ENCODE measurements at regions of chr1 and their contacts with region 1.

Region 1: GRCh38 chr1:29181413-29182225 is at the start of gene SRSF4:
- DNase-seq: peak; percentile 98 to 99 (median 99)
- H3K4me3 ChIP-seq: peak within 1 kb of the TSS; percentile 86 to 99
- H3K4me3 Mint-ChIP-seq: peak within 1 kb of the TSS; percentile 93 to 97 (median 95)
- H3K27ac ChIP-seq: peak within 1 kb of the TSS; percentile 93
- H3K27ac Mint-ChIP-seq: peak within 1 kb of the TSS; percentile 93 to 97 (median 95)
- H3K4me1 ChIP-seq: peaks cover 51% of the 10 kb centered on the region
- H3K4me1 Mint-ChIP-seq: peaks cover 30 to 64% (median 45%) of the 10 kb centered on the region in 4 donors
- H3K27me3 ChIP-seq: no peaks in the 10 kb centered on the region
- H3K27me3 Mint-ChIP-seq: no peaks in the 10 kb centered on the region
- total RNA-seq, gene SRSF4: 83.3 to 86.8 TPM

Region 2: GRCh38 chr1:28648474-28649198 is 533.0 kb before region 1 on chr1 and contains the start of gene RNU11:
- CTCF ChIA-PET with region 1: interaction called, 6 read pairs
- POLR2A ChIA-PET with region 1: interaction called, 25 read pairs
- intact Hi-C with region 1: loop called (anchors 1 kb)
- DNase-seq: peak; percentile 93 to 95 (median 95)
- H3K4me3 ChIP-seq: peak within 1 kb of the TSS; percentile 55 to 91
- H3K4me3 Mint-ChIP-seq: peak within 1 kb of the TSS; percentile 84 to 94 (median 90)
- H3K27ac ChIP-seq: peak within 1 kb of the TSS; percentile 96
- H3K27ac Mint-ChIP-seq: peak within 1 kb of the TSS; percentile 99 to 100 (median 99)
- H3K4me1 ChIP-seq: peaks cover 31% of the 10 kb centered on the region
- H3K4me1 Mint-ChIP-seq: peaks cover 15 to 36% (median 25%) of the 10 kb centered on the region in 4 donors
- H3K27me3 ChIP-seq: no peaks in the 10 kb centered on the region
- H3K27me3 Mint-ChIP-seq: no peaks in the 10 kb centered on the region
- total RNA-seq, gene RNU11: not detected

Region 3: DNA sequence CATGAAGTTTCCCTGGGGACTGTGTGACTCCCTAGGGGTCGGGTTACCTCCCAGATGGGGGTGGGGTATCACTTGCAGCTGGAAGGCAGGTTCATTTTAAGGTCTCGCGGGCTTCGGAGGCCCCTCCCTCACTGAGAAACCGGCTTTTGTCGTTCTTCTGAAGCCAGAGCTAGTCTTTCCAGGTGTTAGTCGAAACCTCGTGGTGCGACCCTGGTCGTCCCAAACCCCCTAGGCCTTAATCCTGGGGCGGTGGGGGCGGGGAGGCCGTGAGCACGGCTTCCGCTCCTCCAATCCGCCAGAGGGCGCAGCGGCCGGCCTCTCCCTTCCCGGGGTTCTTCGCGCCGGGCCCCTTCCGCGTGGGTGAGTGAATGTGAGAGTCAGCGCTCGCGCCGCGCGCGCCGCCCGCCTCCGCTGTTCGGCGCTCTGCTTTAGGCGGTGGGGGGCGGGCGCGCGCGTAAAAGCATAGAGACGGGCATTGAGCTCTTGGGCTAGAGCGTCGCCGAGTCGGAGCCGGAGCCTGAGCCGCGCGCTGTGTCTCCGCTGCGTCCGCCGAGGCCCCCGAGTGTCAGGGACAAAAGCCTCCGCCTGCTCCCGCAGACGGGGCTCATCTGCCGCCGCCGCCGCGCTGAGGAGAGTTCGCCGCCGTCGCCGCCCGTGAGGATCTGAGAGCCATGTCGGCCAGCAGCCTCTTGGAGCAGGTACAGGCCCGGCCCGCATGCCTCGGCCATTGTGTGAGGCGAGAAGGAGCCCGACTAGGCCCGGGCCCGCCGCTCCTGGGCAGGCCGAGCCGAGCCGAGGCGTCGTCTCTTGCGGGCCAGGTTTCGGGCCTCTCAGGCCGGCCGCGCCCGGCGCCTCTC is 444.9 kb before region 1 on chr1 and contains the start of gene YTHDF2:
- CTCF ChIA-PET with region 1: interaction called, 9 read pairs
- POLR2A ChIA-PET with region 1: interaction called, 30 read pairs
- intact Hi-C with region 1: no loop called
- DNase-seq: peak; percentile 97
- H3K4me3 ChIP-seq: peak within 1 kb of the TSS; percentile 55 to 59
- H3K4me3 Mint-ChIP-seq: peak within 1 kb of the TSS; percentile 92 to 99 (median 96)
- H3K27ac ChIP-seq: peak within 1 kb of the TSS; percentile 90
- H3K27ac Mint-ChIP-seq: peak within 1 kb of the TSS; percentile 93 to 98 (median 97)
- H3K4me1 ChIP-seq: peaks cover 43% of the 10 kb centered on the region
- H3K4me1 Mint-ChIP-seq: peaks cover 18 to 51% (median 29%) of the 10 kb centered on the region in 4 donors
- H3K27me3 ChIP-seq: no peaks in the 10 kb centered on the region
- H3K27me3 Mint-ChIP-seq: peaks cover 0 to 2% of the 10 kb centered on the region in 2 donors
- total RNA-seq, gene YTHDF2: 65.1 to 76.8 TPM

Region 4: GRCh38 chr1:28914228-28915030 is 267.2 kb before region 1 on chr1 and contains the start of gene EPB41:
- CTCF ChIA-PET with region 1: no interaction called
- POLR2A ChIA-PET with region 1: interaction called, 10 read pairs
- intact Hi-C with region 1: no loop called
- DNase-seq: peak; percentile 87 to 91 (median 87)
- H3K4me3 ChIP-seq: peak within 1 kb of the TSS; percentile 83 to 90
- H3K4me3 Mint-ChIP-seq: peak within 1 kb of the TSS; percentile 98 to 99 (median 99)
- H3K27ac ChIP-seq: peak within 1 kb of the TSS; percentile 65
- H3K27ac Mint-ChIP-seq: peak within 1 kb of the TSS; percentile 93 to 98 (median 96)
- H3K4me1 ChIP-seq: peaks cover 50% of the 10 kb centered on the region
- H3K4me1 Mint-ChIP-seq: peaks cover 34 to 55% (median 40%) of the 10 kb centered on the region in 4 donors
- H3K27me3 ChIP-seq: no peaks in the 10 kb centered on the region
- H3K27me3 Mint-ChIP-seq: no peaks in the 10 kb centered on the region
- total RNA-seq, gene EPB41: 320 to 321 TPM

Region 5: DNA sequence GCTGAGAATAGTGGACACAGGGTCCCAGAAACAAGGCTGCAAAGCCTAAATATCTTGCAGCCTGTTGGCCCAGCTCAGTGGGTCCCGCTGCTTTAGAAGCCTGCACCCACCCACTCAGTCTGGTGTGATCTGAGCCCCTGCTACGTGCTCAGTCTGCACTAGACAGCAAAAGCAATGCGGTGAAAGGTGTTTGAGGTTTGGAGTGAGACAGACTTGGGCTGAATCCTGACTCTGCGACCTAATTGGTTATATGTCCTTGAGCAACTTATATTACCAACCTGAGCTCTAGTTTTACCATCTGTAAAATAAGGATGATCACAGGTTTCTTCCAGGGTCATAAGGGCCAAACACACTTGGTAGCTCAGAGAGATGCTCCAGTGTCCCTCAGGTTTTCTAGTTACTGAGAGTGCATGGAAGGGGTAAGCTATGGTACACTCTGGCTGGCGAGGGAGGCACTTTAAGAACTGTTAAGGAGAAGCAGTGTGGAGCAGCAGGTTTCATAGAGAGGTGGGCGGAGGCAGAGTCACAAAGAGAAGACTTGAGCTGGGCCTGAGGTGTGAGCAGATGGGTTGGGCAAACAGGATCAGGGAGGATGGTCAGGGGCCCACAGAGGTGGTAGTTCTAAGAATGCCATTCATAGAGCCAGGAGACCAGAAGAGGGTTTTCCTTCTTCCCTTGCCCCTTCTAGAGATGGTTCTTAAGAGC is 68.1 kb before region 1 on chr1:
- CTCF ChIA-PET with region 1: no interaction called
- POLR2A ChIA-PET with region 1: no interaction called
- intact Hi-C with region 1: no loop called
- DNase-seq: no peak
- H3K4me3 ChIP-seq: no peak overlapping the region
- H3K4me3 Mint-ChIP-seq: peak overlapping the region in 1 of 8 donors; percentile 23
- H3K27ac ChIP-seq: no peak overlapping the region
- H3K27ac Mint-ChIP-seq: peak overlapping the region in 2 of 7 donors; percentile 12 to 33
- H3K4me1 ChIP-seq: no peaks in the 10 kb centered on the region
- H3K4me1 Mint-ChIP-seq: peaks cover 0 to 2% (median 0%) of the 10 kb centered on the region in 4 donors
- H3K27me3 ChIP-seq: no peaks in the 10 kb centered on the region
- H3K27me3 Mint-ChIP-seq: no peaks in the 10 kb centered on the region

Region 6: GRCh38 chr1:29124366-29125236 is 57.0 kb before region 1 on chr1:
- CTCF ChIA-PET with region 1: interaction called, 4 read pairs
- POLR2A ChIA-PET with region 1: interaction called, 9 read pairs
- intact Hi-C with region 1: loop called (anchors 10 kb)
- DNase-seq: peak; percentile 45 to 64 (median 52)
- H3K4me3 ChIP-seq: peak overlapping the region; percentile 52 to 55
- H3K4me3 Mint-ChIP-seq: peak overlapping the region; percentile 60 to 80 (median 74)
- H3K27ac ChIP-seq: peak overlapping the region; percentile 0
- H3K27ac Mint-ChIP-seq: no peak overlapping the region
- H3K4me1 ChIP-seq: peaks cover 25% of the 10 kb centered on the region
- H3K4me1 Mint-ChIP-seq: peaks cover 3 to 21% (median 10%) of the 10 kb centered on the region in 4 donors
- H3K27me3 ChIP-seq: no peaks in the 10 kb centered on the region
- H3K27me3 Mint-ChIP-seq: peaks cover 5 to 19% of the 10 kb centered on the region in 2 donors

Region 7: DNA sequence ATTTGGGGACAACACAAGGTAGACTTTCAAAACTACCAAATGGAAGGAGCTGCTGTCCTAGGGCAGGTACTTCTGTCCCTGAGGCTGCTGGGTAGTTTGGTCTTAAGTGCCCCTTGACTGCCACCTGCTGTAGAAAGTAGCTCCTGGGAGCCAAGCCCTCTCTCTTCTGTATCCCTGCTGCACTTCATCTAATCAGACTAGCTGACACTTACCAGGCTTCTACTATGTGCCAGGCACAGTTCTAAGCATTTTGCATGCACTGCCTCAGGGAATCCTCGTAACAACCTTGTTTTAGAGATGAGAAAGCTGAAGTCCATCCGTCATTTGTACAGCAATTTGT is 15.9 kb after region 1 on chr1:
- CTCF ChIA-PET with region 1: interaction called, 45 read pairs
- POLR2A ChIA-PET with region 1: interaction called, 22 read pairs
- intact Hi-C with region 1: loop called (anchors 2 kb)
- DNase-seq: peak in 4 of 5 donors; percentile 33 to 43 (median 36)
- H3K4me3 ChIP-seq: no peak overlapping the region
- H3K4me3 Mint-ChIP-seq: no peak overlapping the region
- H3K27ac ChIP-seq: no peak overlapping the region
- H3K27ac Mint-ChIP-seq: peak overlapping the region in 1 of 7 donors; percentile 24
- H3K4me1 ChIP-seq: no peaks in the 10 kb centered on the region
- H3K4me1 Mint-ChIP-seq: peaks cover 0 to 2% (median under 1%) of the 10 kb centered on the region in 4 donors
- H3K27me3 ChIP-seq: no peaks in the 10 kb centered on the region
- H3K27me3 Mint-ChIP-seq: no peaks in the 10 kb centered on the region

Region 8: GRCh38 chr1:29230553-29231378 is 49.1 kb after region 1 on chr1 and contains the start of gene MECR:
- CTCF ChIA-PET with region 1: no interaction called
- POLR2A ChIA-PET with region 1: interaction called, 14 read pairs
- intact Hi-C with region 1: no loop called
- DNase-seq: peak; percentile 91 to 95 (median 92)
- H3K4me3 ChIP-seq: peak within 1 kb of the TSS; percentile 59 to 78
- H3K4me3 Mint-ChIP-seq: peak within 1 kb of the TSS; percentile 92 to 97 (median 94)
- H3K27ac ChIP-seq: peak within 1 kb of the TSS; percentile 61
- H3K27ac Mint-ChIP-seq: peak within 1 kb of the TSS; percentile 91 to 98 (median 96)
- H3K4me1 ChIP-seq: peaks cover 16% of the 10 kb centered on the region
- H3K4me1 Mint-ChIP-seq: peaks cover 15 to 25% (median 19%) of the 10 kb centered on the region in 4 donors
- H3K27me3 ChIP-seq: no peaks in the 10 kb centered on the region
- H3K27me3 Mint-ChIP-seq: peaks cover 3 to 7% of the 10 kb centered on the region in 2 donors
- total RNA-seq, gene MECR: 15.8 to 17.1 TPM

Measured in CD4-positive, alpha-beta memory T cell (primary cell).